ENCODE measurements at regions of chr15 and their contacts with region 1.

Region 1: DNA sequence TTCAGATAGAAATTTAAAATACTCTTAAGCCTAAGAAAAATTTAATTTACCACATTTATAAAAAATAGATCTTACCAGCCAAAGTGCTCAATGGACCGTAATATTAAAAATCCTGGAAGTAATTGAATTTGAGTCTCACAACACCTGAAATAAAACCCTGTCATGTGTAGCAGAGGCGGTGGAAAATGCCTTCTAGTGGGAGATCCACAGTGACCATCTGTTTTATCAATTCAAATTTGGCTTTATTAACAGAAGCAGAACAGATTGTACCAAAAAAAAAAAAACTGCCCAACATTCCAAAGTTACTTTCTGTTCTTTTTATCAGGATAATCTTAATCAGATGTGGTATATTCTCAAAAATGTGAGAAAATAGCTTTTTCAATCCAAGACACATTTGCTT is 71.7 kb downstream of the DMXL2 start:
- DNase-seq: no peak
- ATAC-seq: no peak
- H3K4me3 ChIP-seq: no peak overlapping the region
- H3K27ac ChIP-seq: no peak overlapping the region
- H3K4me1 ChIP-seq: no peaks in the 10 kb centered on the region
- H3K27me3 ChIP-seq: no peaks in the 10 kb centered on the region
- CTCF ChIP-seq: no peak
- EP300 ChIP-seq: no peak
- POLR2A ChIP-seq: no peak
- RAD21 ChIP-seq: no peak

Region 2: GRCh38 chr15:51484781-51485180 is 66.1 kb before region 1 on chr15:
- CTCF ChIA-PET with region 1: no interaction called
- POLR2A ChIA-PET with region 1: no interaction called
- RAD21 ChIA-PET with region 1: no interaction called
- SMC1A ChIA-PET with region 1: no interaction called
- in situ Hi-C with region 1: no loop called
- intact Hi-C with region 1: loop called (anchors 10 kb)
- DNase-seq: no peak
- ATAC-seq: no peak
- H3K4me3 ChIP-seq: no peak overlapping the region
- H3K27ac ChIP-seq: no peak overlapping the region
- H3K4me1 ChIP-seq: no peaks in the 10 kb centered on the region
- H3K27me3 ChIP-seq: no peaks in the 10 kb centered on the region
- CTCF ChIP-seq: no peak
- EP300 ChIP-seq: no peak
- POLR2A ChIP-seq: no peak
- RAD21 ChIP-seq: no peak

Region 3: GRCh38 chr15:51536965-51537574 is 13.8 kb before region 1 on chr15:
- CTCF ChIA-PET with region 1: interaction called, 8 read pairs
- POLR2A ChIA-PET with region 1: no interaction called
- RAD21 ChIA-PET with region 1: interaction called, 7 read pairs
- SMC1A ChIA-PET with region 1: interaction called, 10 read pairs
- in situ Hi-C with region 1: no loop called
- intact Hi-C with region 1: no loop called
- DNase-seq: no peak
- ATAC-seq: peak; percentile 53; the same call in 1 of the 3 replicates
- H3K4me3 ChIP-seq: no peak overlapping the region
- H3K27ac ChIP-seq: no peak overlapping the region
- H3K4me1 ChIP-seq: no peaks in the 10 kb centered on the region
- H3K27me3 ChIP-seq: no peaks in the 10 kb centered on the region
- CTCF ChIP-seq: peak; percentile 50 to 69 (median 56)
- EP300 ChIP-seq: no peak
- POLR2A ChIP-seq: no peak
- RAD21 ChIP-seq: peak; percentile 43

Region 4: GRCh38 chr15:51561271-51561670 is 10.4 kb after region 1 on chr15:
- CTCF ChIA-PET with region 1: no interaction called
- POLR2A ChIA-PET with region 1: no interaction called
- RAD21 ChIA-PET with region 1: no interaction called
- SMC1A ChIA-PET with region 1: no interaction called
- in situ Hi-C with region 1: no loop called
- intact Hi-C with region 1: no loop called
- DNase-seq: no peak
- ATAC-seq: no peak
- H3K4me3 ChIP-seq: no peak overlapping the region
- H3K27ac ChIP-seq: no peak overlapping the region
- H3K4me1 ChIP-seq: no peaks in the 10 kb centered on the region
- H3K27me3 ChIP-seq: no peaks in the 10 kb centered on the region
- CTCF ChIP-seq: no peak
- EP300 ChIP-seq: no peak
- POLR2A ChIP-seq: no peak
- RAD21 ChIP-seq: no peak

Region 5: GRCh38 chr15:51642614-51643013 is 91.8 kb after region 1 on chr15:
- CTCF ChIA-PET with region 1: no interaction called
- POLR2A ChIA-PET with region 1: no interaction called
- RAD21 ChIA-PET with region 1: no interaction called
- SMC1A ChIA-PET with region 1: no interaction called
- in situ Hi-C with region 1: no loop called
- intact Hi-C with region 1: no loop called
- DNase-seq: no peak
- ATAC-seq: no peak
- H3K4me3 ChIP-seq: no peak overlapping the region
- H3K27ac ChIP-seq: no peak overlapping the region
- H3K4me1 ChIP-seq: peaks cover 3% of the 10 kb centered on the region; the same call in 1 of the 2 replicates
- H3K27me3 ChIP-seq: no peaks in the 10 kb centered on the region
- CTCF ChIP-seq: no peak
- EP300 ChIP-seq: no peak
- POLR2A ChIP-seq: no peak
- RAD21 ChIP-seq: no peak

Region 6: DNA sequence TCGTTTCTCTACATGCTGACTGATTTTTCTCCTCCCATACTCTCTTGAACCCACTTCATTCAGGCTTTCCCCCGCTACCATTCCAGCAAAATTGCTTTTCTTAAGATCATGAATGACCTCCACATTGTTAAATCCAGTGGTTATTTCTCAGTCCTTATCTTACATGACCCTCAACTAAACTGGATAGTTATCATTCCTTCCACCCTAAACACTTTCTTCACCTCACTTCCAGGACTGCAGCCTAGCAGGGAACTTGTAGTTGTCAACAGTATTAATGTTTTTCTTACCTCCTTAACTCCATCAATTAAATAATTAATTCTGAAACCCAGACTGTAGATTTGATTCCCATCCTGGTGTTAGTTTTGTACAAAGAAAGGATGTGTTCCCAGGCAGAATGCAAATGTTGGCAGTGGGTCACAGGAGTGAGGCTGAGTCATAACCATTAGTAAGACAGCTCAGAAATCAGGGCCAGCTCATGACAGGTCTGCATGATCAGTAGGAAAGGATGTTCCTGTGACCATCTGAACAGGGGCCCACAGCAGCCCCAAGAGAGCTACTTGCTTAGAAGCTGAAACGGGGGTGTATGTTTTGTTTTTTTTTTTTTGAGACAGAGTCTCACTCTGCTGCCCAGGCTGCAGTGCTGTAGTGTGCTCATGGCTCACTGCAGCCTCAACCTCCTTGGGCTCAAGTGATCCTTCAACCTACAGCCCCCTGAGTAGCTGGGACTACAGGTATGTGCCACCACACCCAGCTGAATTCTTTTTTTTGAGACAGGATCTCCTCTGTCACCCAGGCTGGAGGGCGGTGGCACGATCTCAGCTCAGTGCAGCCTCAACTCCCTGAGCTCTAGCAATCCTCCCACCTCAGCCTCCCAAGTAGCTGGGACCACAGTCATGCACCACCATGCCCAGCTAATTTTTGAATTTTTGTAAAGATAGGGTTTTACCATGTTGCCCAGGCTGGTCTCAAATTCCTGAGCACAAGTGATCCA is 552.7 kb after region 1 on chr15:
- CTCF ChIA-PET with region 1: no interaction called
- POLR2A ChIA-PET with region 1: no interaction called
- RAD21 ChIA-PET with region 1: no interaction called
- SMC1A ChIA-PET with region 1: no interaction called
- in situ Hi-C with region 1: no loop called
- intact Hi-C with region 1: no loop called
- DNase-seq: peak; percentile 94
- ATAC-seq: peak; percentile 76
- H3K4me3 ChIP-seq: no peak overlapping the region
- H3K27ac ChIP-seq: no peak overlapping the region
- H3K4me1 ChIP-seq: peaks cover 33% of the 10 kb centered on the region
- H3K27me3 ChIP-seq: no peaks in the 10 kb centered on the region
- CTCF ChIP-seq: no peak
- EP300 ChIP-seq: peak; percentile 59 to 76; a peak in 3 of 4 replicates
- POLR2A ChIP-seq: 0 out of 2 replicates have a peak, but pooled peaks have one; percentile 12
- RAD21 ChIP-seq: peak; percentile 31; the same call in 1 of the 2 replicates

Measured in GM12878 (cell line).